ENCODE measurements at regions of chr3 and their contacts with region 1.

Region 1: DNA sequence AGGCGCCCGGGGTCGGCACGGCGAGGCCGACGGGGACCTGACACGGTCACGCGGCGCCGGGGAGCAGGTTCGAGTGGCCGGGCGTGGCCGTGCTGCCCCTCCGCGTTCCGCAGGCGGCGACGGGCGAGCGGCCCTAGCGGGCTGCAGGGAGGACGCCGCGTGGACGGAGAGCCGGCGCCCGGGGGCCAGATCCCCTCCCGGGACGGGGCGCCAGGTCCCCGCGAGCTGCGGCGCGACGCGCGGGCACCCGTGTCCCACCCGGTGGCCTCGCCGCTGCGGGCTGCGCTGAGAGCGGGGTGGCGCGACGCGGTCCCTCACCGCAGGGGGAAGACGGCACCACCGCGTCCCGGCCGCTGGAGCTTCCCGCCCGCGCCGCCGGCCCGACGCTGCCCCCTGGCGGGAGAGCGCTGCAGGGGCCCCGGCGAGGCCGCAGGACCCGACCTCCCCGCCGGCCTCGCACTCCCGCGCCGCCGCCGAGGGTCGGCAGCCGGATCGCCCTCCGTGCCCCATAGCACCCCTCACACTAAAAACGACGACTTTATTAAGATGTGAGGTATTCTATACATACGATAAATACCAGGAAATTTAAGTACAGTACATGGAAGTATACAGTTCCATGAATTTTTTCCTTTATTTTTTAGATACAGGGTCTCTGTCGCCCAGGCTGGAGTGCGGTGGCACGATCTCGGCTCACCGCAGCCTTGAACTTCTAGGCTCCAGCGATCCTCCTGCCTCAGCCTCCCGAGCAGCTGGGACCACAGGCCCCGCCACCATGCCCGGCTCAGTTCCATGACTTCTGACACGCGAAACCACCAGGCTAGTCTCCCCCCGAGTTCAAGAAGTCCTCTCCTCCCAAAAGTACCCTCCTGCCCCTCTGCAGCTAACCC is 1.3 kb upstream of the PIGZ start:
- DNase-seq: no peak
- H3K4me3 ChIP-seq: peak overlapping the region; percentile 68
- H3K27me3 ChIP-seq: no peaks in the 10 kb centered on the region; the same call in 1 of the 2 replicates
- CTCF ChIP-seq: no peak

Region 2: DNA sequence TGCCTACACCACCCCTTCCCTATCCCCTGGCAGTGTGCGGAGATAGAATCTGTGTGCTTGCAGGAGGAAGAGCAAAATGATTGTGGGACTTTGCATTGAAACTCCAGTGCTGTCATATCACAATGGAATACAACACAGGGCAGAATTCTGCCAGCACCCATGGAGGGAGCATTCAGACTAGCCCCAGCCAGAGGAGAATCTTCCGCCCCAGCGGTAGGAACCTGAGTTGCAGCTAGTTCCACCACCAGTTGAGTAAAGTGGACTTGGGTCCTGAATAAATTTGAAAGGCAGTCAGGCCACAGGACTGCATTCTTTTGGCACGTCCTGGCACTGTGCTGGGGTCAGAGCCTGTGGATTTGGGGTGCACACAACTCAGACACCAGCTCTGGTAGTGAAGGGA is 55.0 kb before region 1 on chr3:
- CTCF ChIA-PET with region 1: no interaction called
- POLR2A ChIA-PET with region 1: no interaction called
- DNase-seq: no peak
- H3K4me3 ChIP-seq: no peak overlapping the region
- H3K27me3 ChIP-seq: no peaks in the 10 kb centered on the region
- CTCF ChIP-seq: no peak

Region 3: DNA sequence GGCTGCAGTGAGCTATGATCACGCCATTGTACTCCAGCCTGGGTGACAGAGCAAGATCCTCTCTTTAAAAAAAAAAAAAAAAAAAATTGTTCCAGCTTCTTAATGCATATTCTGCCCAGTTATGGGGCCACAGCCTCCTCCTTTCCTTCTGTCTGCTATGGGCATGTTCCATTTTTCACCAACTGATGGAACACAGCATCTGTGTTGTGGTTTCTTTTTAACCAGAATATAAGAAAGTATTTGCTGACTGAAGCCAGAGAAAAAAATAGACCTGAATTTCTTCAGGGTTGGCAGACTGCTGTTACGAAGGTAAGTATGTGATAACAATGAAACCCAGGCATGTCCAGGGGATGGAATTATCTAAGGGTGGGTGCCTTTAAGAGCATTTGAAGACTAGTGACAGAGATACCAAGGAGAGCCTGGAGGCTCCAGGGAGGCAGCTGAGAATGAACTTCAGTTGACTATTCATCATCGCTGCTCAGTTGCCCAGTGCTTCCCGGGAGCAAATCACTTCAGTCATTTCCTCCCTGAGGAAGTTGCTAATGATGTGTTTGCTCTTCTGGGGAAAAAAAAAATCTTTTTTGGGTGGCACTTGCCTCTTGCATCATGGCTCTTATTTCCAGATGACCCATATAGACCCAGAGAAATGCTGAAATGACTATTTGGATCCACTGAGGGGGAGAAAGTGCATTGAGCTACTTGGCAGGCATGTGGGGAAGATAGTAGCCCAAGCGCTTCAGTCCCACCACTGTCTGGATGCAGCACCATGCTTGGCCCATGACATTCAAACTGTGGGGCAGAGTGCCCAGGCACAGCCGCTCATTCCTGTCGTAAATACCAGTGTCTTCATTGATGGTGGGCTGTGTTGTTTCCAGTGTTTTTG is 42.1 kb before region 1 on chr3:
- CTCF ChIA-PET with region 1: no interaction called
- POLR2A ChIA-PET with region 1: interaction called, 14 read pairs
- DNase-seq: no peak
- H3K4me3 ChIP-seq: no peak overlapping the region
- H3K27me3 ChIP-seq: no peaks in the 10 kb centered on the region
- CTCF ChIP-seq: no peak

Region 4: GRCh38 chr3:196989721-196990271 is 19.9 kb after region 1 on chr3:
- CTCF ChIA-PET with region 1: no interaction called
- POLR2A ChIA-PET with region 1: no interaction called
- DNase-seq: no peak
- H3K4me3 ChIP-seq: no peak overlapping the region
- H3K27me3 ChIP-seq: peaks cover 9% of the 10 kb centered on the region
- CTCF ChIP-seq: no peak

Region 5: GRCh38 chr3:197001972-197002700 is 32.2 kb after region 1 on chr3:
- CTCF ChIA-PET with region 1: no interaction called
- POLR2A ChIA-PET with region 1: no interaction called
- DNase-seq: no peak
- H3K4me3 ChIP-seq: peak overlapping the region; percentile 59
- H3K27me3 ChIP-seq: no peaks in the 10 kb centered on the region
- CTCF ChIP-seq: no peak

Measured in BJ (cell line).